Activated CD4-positive, alpha-beta T cell treated with anti-CD3 and anti-CD28 coated beads, Interleukin-2, amount 10 ng/mL, durations not matched to agents 7 days and 5 days (primary cell): ENCODE measurements at regions of chr17 and their contacts with region 1.

Region 1: GRCh38 chr17:29617125-29617480 is 5.6 kb downstream of the CORO6 start:
- DNase-seq: peak; percentile 93
- H3K4me3 Mint-ChIP-seq: peak overlapping the region; percentile 82
- H3K27ac Mint-ChIP-seq: peak overlapping the region; percentile 92
- H3K4me1 Mint-ChIP-seq: peaks cover 51% of the 10 kb centered on the region
- H3K27me3 Mint-ChIP-seq: peaks cover 8% of the 10 kb centered on the region

Region 2: GRCh38 chr17:29579866-29580771 is 37.0 kb before region 1 on chr17:
- CTCF ChIA-PET with region 1: interaction called, 36 read pairs
- POLR2A ChIA-PET with region 1: no interaction called
- DNase-seq: peak; percentile 92
- H3K4me3 Mint-ChIP-seq: no peak overlapping the region
- H3K27ac Mint-ChIP-seq: peak overlapping the region; percentile 84
- H3K4me1 Mint-ChIP-seq: peaks cover 37% of the 10 kb centered on the region
- H3K27me3 Mint-ChIP-seq: no peaks in the 10 kb centered on the region

Region 3: GRCh38 chr17:29597361-29598172 is 19.5 kb before region 1 on chr17:
- CTCF ChIA-PET with region 1: interaction called, 116 read pairs
- POLR2A ChIA-PET with region 1: interaction called, 5 read pairs
- DNase-seq: no peak
- H3K4me3 Mint-ChIP-seq: no peak overlapping the region
- H3K27ac Mint-ChIP-seq: no peak overlapping the region
- H3K4me1 Mint-ChIP-seq: peaks cover 11% of the 10 kb centered on the region
- H3K27me3 Mint-ChIP-seq: no peaks in the 10 kb centered on the region

Region 4: GRCh38 chr17:29628644-29629043 is 11.5 kb after region 1 on chr17:
- CTCF ChIA-PET with region 1: interaction called, 24 read pairs
- POLR2A ChIA-PET with region 1: no interaction called
- DNase-seq: no peak
- H3K4me3 Mint-ChIP-seq: no peak overlapping the region
- H3K27ac Mint-ChIP-seq: no peak overlapping the region
- H3K4me1 Mint-ChIP-seq: peaks cover 44% of the 10 kb centered on the region
- H3K27me3 Mint-ChIP-seq: no peaks in the 10 kb centered on the region

Region 5: GRCh38 chr17:29640413-29640812 is 23.3 kb after region 1 on chr17:
- CTCF ChIA-PET with region 1: interaction called, 33 read pairs
- POLR2A ChIA-PET with region 1: no interaction called
- DNase-seq: no peak
- H3K4me3 Mint-ChIP-seq: no peak overlapping the region
- H3K27ac Mint-ChIP-seq: no peak overlapping the region
- H3K4me1 Mint-ChIP-seq: peaks cover 19% of the 10 kb centered on the region
- H3K27me3 Mint-ChIP-seq: no peaks in the 10 kb centered on the region

Region 6: GRCh38 chr17:29777663-29778062 is 160.6 kb after region 1 on chr17:
- CTCF ChIA-PET with region 1: interaction called, 39 read pairs
- POLR2A ChIA-PET with region 1: interaction called, 3 read pairs
- DNase-seq: no peak
- H3K4me3 Mint-ChIP-seq: no peak overlapping the region
- H3K27ac Mint-ChIP-seq: no peak overlapping the region
- H3K4me1 Mint-ChIP-seq: peaks cover 14% of the 10 kb centered on the region
- H3K27me3 Mint-ChIP-seq: no peaks in the 10 kb centered on the region